ENCODE measurements at regions of chr1 and their contacts with region 1.

Region 1: GRCh38 chr1:203148125-203148524 is 20.6 kb downstream of the ADORA1 start:
- DNase-seq: no peak
- H3K4me3 ChIP-seq: no peak overlapping the region
- H3K27ac ChIP-seq: no peak overlapping the region
- H3K4me1 ChIP-seq: peaks cover 0 to 6% (median 0%) of the 10 kb centered on the region in 4 experiments
- H3K27me3 ChIP-seq: no peaks in the 10 kb centered on the region

Region 2: DNA sequence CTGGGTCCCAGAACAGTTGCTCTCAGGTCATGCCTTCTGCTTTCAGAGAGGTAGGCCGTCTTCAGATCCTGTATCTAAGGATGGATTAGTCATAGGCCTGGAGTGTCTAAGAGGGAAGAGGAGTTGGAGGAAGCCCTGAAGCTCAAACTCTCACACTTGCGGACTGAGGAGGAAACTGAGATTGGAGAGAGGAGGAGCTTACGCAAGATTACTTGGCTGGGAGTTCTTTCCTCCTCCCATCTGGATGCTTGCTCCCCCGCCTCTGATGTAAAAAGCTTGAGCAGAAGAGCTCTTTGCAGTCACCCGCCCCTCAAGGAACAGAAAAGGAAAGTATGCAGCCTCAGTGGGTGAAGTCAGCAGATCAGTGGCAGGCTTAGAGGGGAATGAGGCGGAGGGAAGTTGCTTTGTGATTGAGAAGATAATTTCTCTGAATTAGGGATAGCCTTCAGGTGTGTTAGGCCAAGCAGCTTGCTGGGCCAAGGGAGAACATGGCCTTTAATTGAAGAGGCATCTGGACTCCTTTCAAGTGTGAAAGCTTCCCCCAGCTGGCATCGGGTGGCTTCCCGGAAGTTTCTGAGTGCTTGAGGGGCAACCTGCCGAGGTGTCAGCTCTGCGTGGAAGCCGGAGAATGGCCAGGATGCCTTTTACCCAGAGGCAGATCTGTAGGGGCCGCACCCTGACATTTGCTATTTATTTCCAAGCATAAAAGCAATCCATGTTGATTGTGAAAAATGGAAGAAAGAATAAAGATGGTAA is 14.0 kb before region 1 on chr1:
- CTCF ChIA-PET with region 1: interaction called, 16 read pairs
- POLR2A ChIA-PET with region 1: no interaction called
- DNase-seq: peak in 1 of 3 donors; percentile 18
- H3K4me3 ChIP-seq: no peak overlapping the region
- H3K27ac ChIP-seq: no peak overlapping the region
- H3K4me1 ChIP-seq: peaks cover 4 to 15% (median 10%) of the 10 kb centered on the region in 4 experiments
- H3K27me3 ChIP-seq: peaks cover 0 to 25% (median 17%) of the 10 kb centered on the region in 5 experiments